ENCODE measurements at regions of chr20 and their contacts with region 1.

Region 1: GRCh38 chr20:13771853-13772453 is 12.8 kb downstream of the ESF1 start:
- DNase-seq: peak in 1 of 2 experiments; percentile 43
- H3K4me3 ChIP-seq: no peak overlapping the region
- H3K27ac ChIP-seq: no peak overlapping the region
- H3K4me1 ChIP-seq: no peaks in the 10 kb centered on the region
- H3K27me3 ChIP-seq: no peaks in the 10 kb centered on the region
- CTCF ChIP-seq: peak; percentile 83

Region 2: DNA sequence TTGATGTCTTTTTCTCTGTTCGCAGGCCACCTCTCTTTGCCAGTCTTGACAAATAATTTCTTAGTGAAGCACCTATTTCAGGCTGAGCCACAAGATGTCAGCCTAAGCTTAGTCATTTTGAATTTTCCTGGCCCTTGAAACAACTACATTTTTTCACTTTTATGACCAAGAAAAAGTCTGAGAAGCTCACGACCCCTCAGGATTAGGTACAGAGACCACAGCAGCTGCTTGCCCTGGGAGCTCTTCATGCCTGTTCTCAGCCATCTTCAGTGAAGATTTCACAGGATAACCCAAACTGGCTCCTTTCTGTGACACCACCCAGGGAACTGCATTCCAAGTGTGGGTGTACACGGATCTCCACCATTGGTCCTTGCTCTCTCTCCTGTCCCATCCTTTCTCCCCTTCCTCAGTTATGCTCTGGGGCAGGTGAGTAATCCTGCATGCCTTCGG is 801.6 kb before region 1 on chr20:
- CTCF ChIA-PET with region 1: no interaction called
- POLR2A ChIA-PET with region 1: no interaction called
- intact Hi-C with region 1: loop called (anchors 5 kb)
- DNase-seq: no peak
- H3K4me3 ChIP-seq: no peak overlapping the region
- H3K27ac ChIP-seq: no peak overlapping the region
- H3K4me1 ChIP-seq: no peaks in the 10 kb centered on the region
- H3K27me3 ChIP-seq: no peaks in the 10 kb centered on the region
- CTCF ChIP-seq: peak; percentile 63

Region 3: DNA sequence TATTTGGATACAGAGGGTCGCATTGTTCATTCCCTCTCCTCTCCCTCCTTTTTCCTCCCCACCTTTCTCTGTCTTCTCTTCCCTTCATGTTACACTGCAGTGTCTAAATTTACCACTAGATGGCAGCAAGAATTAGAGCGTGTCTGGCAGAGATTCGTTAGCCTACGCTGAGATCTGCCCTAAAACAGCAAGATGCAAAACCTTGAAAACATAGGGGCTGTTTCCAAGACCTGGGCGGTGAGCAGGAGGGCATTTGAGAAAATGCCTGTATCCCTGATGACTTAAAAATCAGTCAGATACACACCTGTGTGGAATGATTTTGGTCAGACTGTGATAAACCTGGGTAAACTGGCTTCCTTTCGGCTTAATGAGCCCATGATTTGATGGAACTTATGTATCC is 652.4 kb before region 1 on chr20:
- CTCF ChIA-PET with region 1: no interaction called
- POLR2A ChIA-PET with region 1: no interaction called
- intact Hi-C with region 1: loop called (anchors 1 kb)
- DNase-seq: peak in 1 of 2 experiments; percentile 20
- H3K4me3 ChIP-seq: no peak overlapping the region
- H3K27ac ChIP-seq: no peak overlapping the region
- H3K4me1 ChIP-seq: no peaks in the 10 kb centered on the region
- H3K27me3 ChIP-seq: no peaks in the 10 kb centered on the region
- CTCF ChIP-seq: peak; percentile 91

Region 4: GRCh38 chr20:13302647-13303450 is 469.1 kb before region 1 on chr20:
- CTCF ChIA-PET with region 1: interaction called, 10 read pairs
- POLR2A ChIA-PET with region 1: no interaction called
- intact Hi-C with region 1: no loop called
- DNase-seq: peak in 1 of 2 experiments; percentile 15
- H3K4me3 ChIP-seq: no peak overlapping the region
- H3K27ac ChIP-seq: no peak overlapping the region
- H3K4me1 ChIP-seq: no peaks in the 10 kb centered on the region
- H3K27me3 ChIP-seq: no peaks in the 10 kb centered on the region
- CTCF ChIP-seq: peak; percentile 76

Region 5: GRCh38 chr20:13755809-13756208 is 16.1 kb before region 1 on chr20:
- CTCF ChIA-PET with region 1: no interaction called
- POLR2A ChIA-PET with region 1: no interaction called
- intact Hi-C with region 1: no loop called
- DNase-seq: no peak
- H3K4me3 ChIP-seq: no peak overlapping the region
- H3K27ac ChIP-seq: no peak overlapping the region
- H3K4me1 ChIP-seq: no peaks in the 10 kb centered on the region
- H3K27me3 ChIP-seq: no peaks in the 10 kb centered on the region
- CTCF ChIP-seq: no peak

Region 6: DNA sequence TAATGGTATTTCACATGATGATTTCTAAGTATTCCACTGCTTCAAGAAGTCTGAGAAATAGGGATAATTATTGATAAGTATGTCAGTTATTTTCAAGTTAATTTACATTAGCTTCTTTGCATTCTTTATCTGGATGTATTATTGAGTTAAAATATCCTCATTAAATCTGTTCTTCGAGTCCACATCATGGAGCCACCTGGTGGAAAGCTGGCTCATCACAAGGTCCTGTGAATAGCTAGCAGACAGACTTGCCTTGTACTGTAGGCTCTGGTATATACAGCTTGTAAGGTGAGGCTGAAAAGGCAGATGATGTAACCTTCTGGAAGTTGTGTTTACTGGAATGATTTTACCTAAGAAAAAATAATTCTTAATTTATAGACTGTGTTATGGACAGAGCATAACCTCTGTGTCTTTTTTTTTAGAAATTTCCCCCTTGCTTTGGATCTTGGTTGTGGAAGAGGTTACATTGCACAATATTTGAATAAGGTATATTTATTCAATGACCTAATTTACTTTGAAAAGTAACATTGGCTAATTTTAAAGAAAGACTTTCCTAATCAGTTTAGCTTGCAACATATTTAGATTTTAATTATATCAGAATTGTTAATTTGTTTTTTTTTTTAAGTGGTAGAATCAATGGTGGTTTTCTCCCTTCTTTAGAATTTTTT is 16.3 kb after region 1 on chr20:
- CTCF ChIA-PET with region 1: interaction called, 11 read pairs
- POLR2A ChIA-PET with region 1: no interaction called
- intact Hi-C with region 1: no loop called
- DNase-seq: peak; percentile 34 to 53
- H3K4me3 ChIP-seq: no peak overlapping the region
- H3K27ac ChIP-seq: no peak overlapping the region
- H3K4me1 ChIP-seq: peaks cover 21% of the 10 kb centered on the region
- H3K27me3 ChIP-seq: no peaks in the 10 kb centered on the region
- CTCF ChIP-seq: peak; percentile 66

Region 7: GRCh38 chr20:13995081-13995694 is 223.2 kb after region 1 on chr20 and contains the start of gene MACROD2:
- CTCF ChIA-PET with region 1: interaction called, 20 read pairs
- POLR2A ChIA-PET with region 1: no interaction called
- intact Hi-C with region 1: no loop called
- DNase-seq: peak; percentile 91 to 99
- H3K4me3 ChIP-seq: peak within 1 kb of the TSS; percentile 66
- H3K27ac ChIP-seq: no peak within 1 kb of the TSS
- H3K4me1 ChIP-seq: peaks cover 10% of the 10 kb centered on the region
- H3K27me3 ChIP-seq: no peaks in the 10 kb centered on the region
- CTCF ChIP-seq: no peak
- total RNA-seq, gene MACROD2: 8.5 and 11.4 TPM in 2 replicates

Measured in PC-9 (cell line).